ENCODE measurements at regions of chr6 and their contacts with region 1.

Region 1: DNA sequence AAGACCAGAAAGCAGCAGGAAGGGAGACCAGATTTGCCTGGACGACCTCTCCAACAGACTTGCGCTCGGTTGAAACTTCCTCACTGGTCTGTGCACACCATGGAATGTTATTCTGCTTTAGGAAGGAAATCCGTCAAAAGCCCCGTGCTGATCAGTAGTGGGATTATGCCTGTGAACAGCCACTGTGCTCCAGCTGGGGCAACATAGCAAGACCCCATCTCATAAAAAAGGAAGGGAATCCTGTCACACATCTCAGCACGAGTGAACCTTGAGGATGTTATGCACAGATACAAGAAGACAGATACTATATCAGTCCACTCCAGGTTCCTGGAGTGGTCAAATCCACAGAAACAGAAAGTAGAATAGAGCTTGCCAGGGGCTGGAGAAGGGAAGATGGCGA is 86.9 kb upstream of the FOXC1 start:
- DNase-seq: no peak
- H3K4me3 ChIP-seq: no peak overlapping the region
- H3K27ac ChIP-seq: no peak overlapping the region
- H3K4me1 ChIP-seq: no peaks in the 10 kb centered on the region
- H3K27me3 ChIP-seq: no peaks in the 10 kb centered on the region
- CTCF ChIP-seq: no peak

Region 2: DNA sequence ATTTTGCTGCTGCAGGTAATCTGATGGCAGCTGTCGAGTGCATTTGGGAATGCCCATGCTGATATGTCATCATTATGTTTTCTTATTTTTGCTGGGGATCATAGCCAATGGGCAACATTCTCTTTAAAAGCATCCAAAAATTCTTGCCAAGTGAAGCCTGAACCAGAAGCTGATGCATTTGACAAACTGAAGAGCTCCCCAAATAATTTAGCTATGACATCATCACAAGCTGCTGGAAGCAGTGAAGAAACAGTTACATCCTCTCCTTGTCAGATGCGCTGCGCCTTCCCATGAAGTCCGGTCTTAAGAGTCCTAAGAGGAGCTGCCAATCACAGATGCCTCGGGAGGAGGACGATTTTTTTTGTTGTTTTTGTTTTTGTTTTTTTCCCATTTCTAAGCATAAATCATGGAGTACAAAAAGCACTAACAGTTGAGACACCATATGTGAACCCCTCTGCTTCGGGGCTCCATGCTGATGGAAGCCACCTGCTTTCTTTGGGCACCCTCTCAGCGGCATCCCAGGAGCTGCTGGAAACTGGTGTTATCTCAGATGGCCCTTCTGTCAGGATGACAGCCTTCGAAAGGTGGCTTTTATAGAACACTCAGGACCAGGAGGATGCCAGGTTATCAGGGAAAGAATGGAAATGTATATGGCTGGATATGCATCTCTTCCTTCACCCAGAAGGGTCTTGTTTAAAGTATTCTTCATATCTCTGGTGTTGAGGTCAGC is 267.0 kb before region 1 on chr6:
- intact Hi-C with region 1: no loop called
- DNase-seq: no peak
- H3K4me3 ChIP-seq: no peak overlapping the region
- H3K27ac ChIP-seq: no peak overlapping the region
- H3K4me1 ChIP-seq: no peaks in the 10 kb centered on the region
- H3K27me3 ChIP-seq: no peaks in the 10 kb centered on the region
- CTCF ChIP-seq: no peak

Region 3: GRCh38 chr6:1554476-1555310 is 31.9 kb after region 1 on chr6:
- intact Hi-C with region 1: loop called (anchors 2 kb)
- DNase-seq: peak; percentile 76
- H3K4me3 ChIP-seq: peak overlapping the region; percentile 44
- H3K27ac ChIP-seq: peak overlapping the region; percentile 40
- H3K4me1 ChIP-seq: no peaks in the 10 kb centered on the region
- H3K27me3 ChIP-seq: no peaks in the 10 kb centered on the region
- CTCF ChIP-seq: peak; percentile 66

Region 4: DNA sequence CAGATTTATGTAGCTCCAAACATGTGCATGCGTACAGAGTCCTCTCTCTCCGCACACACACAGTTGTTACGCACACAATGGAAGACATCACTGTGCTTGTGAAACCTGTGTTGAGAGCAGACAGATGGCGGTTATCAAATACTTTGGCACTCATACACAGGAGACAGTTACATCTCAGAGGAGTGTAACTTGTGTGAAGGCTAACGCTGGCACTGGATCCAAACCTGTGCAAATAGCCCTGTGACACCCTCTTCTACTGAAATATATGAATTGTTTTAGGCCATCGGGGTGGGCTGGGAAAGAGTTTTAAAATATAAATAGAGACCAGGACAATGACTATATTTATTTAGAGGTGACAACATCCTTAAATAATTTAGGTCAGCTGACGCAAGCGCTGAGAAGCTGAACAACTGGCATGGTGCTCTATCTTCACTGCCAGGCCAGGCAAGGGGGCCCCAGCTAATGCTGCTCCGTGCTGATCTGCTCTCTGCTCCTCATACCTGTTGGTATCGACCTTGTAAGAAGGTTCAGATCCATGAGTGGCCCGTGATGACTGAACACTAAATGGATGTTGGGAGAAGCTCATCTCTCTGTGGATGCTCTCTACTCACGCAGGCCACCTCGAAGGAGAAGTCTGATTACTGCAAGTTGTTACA is 156.4 kb after region 1 on chr6:
- intact Hi-C with region 1: no loop called
- DNase-seq: no peak
- H3K4me3 ChIP-seq: no peak overlapping the region
- H3K27ac ChIP-seq: no peak overlapping the region
- H3K4me1 ChIP-seq: no peaks in the 10 kb centered on the region
- H3K27me3 ChIP-seq: no peaks in the 10 kb centered on the region
- CTCF ChIP-seq: no peak